Activated CD8-positive, alpha-beta memory T cell treated with anti-CD3 and anti-CD28 coated beads, Interleukin-2, amount 10 ng/mL, durations not matched to agents 7 days and 5 days (primary cell): ENCODE measurements at regions of chr6 and their contacts with region 1.

Region 1: DNA sequence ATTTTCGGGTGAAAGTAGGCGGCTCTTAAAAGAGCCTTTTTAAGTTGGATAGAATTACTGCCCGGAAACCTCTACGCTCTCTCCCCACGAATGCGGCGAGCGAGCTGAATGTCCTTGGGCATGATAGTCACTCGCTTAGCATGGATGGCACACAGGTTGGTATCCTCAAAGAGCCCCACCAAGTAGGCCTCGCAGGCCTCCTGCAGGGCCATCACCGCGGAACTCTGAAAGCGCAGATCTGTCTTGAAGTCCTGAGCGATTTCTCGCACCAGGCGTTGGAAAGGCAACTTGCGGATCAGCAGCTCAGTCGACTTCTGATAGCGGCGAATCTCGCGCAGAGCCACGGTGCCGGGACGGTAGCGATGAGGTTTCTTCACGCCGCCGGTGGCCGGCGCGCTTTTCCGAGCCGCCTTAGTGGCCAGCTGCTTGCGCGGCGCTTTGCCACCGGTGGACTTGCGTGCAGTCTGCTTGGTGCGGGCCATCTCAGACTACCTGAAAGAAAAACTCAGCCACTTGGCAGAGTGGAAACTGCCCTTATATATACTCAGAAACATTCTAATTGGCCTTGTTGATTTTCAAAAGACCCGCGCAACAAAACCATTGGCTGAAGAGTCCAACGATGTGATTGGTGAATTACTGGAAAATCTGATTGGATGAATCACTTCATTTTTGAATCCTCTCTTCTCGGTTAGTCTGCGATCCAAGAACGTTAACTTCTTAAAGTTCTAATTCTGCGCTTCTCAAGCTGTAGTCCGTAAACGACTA is 93.9 kb upstream of the BTN3A2 start:
- DNase-seq: peak; percentile 91
- ATAC-seq: peak; percentile 49
- H3K4me3 Mint-ChIP-seq: no peak overlapping the region
- H3K27ac Mint-ChIP-seq: no peak overlapping the region
- H3K4me1 Mint-ChIP-seq: peaks cover 37% of the 10 kb centered on the region
- H3K27me3 Mint-ChIP-seq: no peaks in the 10 kb centered on the region

Region 2: GRCh38 chr6:26216356-26216885 is 54.7 kb before region 1 on chr6:
- CTCF ChIA-PET with region 1: interaction called, 19 read pairs
- DNase-seq: peak; percentile 93
- ATAC-seq: peak; percentile 68
- H3K4me3 Mint-ChIP-seq: no peak overlapping the region
- H3K27ac Mint-ChIP-seq: no peak overlapping the region
- H3K4me1 Mint-ChIP-seq: peaks cover 28% of the 10 kb centered on the region
- H3K27me3 Mint-ChIP-seq: no peaks in the 10 kb centered on the region

Region 3: GRCh38 chr6:26234421-26235296 is 36.4 kb before region 1 on chr6:
- CTCF ChIA-PET with region 1: interaction called, 10 read pairs
- DNase-seq: peak; percentile 89
- ATAC-seq: peak; percentile 67
- H3K4me3 Mint-ChIP-seq: peak overlapping the region; percentile 82
- H3K27ac Mint-ChIP-seq: peak overlapping the region; percentile 98
- H3K4me1 Mint-ChIP-seq: peaks cover 38% of the 10 kb centered on the region
- H3K27me3 Mint-ChIP-seq: peaks cover 2% of the 10 kb centered on the region

Region 4: DNA sequence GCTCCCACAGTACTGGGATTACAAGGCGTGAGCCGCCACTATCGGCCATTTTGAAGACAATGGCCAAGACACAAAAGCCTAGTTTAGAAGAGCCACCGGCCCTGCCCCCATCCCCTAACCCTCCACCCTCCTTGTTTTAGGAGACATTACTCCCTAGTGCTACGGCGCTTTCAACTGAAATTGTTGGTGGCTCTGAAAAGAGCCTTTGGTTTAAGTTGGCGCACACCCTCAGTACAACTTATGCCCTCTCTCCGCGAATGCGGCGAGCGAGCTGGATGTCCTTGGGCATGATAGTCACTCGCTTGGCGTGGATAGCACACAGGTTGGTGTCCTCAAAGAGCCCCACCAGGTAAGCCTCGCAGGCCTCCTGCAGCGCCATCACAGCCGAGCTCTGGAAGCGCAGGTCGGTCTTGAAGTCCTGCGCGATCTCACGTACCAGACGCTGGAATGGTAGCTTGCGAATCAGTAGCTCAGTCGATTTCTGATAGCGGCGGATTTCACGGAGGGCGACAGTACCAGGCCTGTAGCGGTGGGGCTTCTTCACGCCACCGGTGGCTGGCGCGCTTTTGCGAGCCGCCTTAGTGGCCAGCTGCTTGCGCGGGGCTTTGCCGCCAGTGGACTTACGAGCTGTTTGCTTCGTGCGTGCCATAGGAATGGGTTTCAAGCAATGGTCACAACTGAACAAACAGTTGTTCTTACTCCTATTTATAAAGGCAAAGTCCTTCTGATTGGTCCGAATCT is 21.0 kb before region 1 on chr6:
- CTCF ChIA-PET with region 1: interaction called, 68 read pairs
- DNase-seq: peak; percentile 88
- ATAC-seq: peak; percentile 56
- H3K4me3 Mint-ChIP-seq: peak overlapping the region; percentile 95
- H3K27ac Mint-ChIP-seq: peak overlapping the region; percentile 100
- H3K4me1 Mint-ChIP-seq: peaks cover 24% of the 10 kb centered on the region
- H3K27me3 Mint-ChIP-seq: no peaks in the 10 kb centered on the region

Region 5: DNA sequence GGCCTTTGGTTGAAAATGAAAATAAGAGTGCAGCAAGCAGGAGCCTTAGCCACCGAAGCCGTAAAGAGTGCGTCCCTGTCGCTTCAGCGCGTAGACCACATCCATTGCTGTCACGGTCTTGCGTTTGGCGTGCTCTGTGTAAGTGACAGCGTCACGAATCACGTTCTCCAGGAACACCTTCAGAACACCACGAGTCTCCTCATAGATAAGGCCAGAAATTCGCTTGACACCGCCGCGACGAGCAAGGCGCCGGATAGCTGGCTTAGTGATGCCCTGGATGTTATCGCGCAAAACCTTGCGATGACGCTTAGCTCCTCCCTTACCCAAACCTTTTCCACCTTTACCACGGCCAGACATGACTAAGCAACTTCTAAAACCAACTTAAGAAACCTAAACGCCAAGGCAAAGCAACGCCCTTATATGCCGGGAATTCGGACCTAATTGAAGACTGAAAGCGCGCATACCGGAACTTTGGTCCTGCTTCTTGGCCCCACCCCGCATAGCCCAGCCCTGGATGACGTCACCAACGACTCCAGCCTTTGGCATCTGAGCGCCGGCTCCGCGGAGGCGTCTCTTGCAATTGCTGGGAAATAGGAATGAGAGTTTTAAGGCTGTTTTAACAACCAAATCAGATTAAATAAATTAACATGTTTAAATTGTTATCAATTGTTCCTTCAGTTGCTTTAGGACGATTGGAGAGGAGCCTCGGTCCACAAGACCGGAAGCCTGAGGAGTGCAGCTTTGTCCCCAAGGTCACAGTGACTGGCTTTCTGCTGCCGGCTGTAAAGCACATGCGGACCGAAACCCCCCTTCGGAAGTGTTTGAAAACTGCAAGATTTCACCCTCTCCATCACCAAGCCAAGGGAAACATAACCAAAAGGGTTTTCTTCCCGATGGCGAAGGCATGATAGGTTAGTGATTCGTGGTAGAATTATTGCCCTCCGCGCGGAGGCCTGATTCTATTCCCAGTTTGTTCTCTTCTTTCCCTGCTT is 14.4 kb after region 1 on chr6:
- CTCF ChIA-PET with region 1: interaction called, 33 read pairs
- DNase-seq: peak; percentile 99
- ATAC-seq: peak; percentile 80
- H3K4me3 Mint-ChIP-seq: peak overlapping the region; percentile 85
- H3K27ac Mint-ChIP-seq: peak overlapping the region; percentile 100
- H3K4me1 Mint-ChIP-seq: peaks cover 36% of the 10 kb centered on the region
- H3K27me3 Mint-ChIP-seq: peaks cover 3% of the 10 kb centered on the region